ENCODE measurements at regions of chrX and their contacts with region 1.

Region 1: GRCh38 chrX:47941423-47941822 is 62.4 kb downstream of the ZNF182 start:
- DNase-seq: no peak

Region 2: GRCh38 chrX:47900833-47901232 is 40.6 kb before region 1 on chrX:
- intact Hi-C with region 1: no loop called
- DNase-seq: no peak

Region 3: DNA sequence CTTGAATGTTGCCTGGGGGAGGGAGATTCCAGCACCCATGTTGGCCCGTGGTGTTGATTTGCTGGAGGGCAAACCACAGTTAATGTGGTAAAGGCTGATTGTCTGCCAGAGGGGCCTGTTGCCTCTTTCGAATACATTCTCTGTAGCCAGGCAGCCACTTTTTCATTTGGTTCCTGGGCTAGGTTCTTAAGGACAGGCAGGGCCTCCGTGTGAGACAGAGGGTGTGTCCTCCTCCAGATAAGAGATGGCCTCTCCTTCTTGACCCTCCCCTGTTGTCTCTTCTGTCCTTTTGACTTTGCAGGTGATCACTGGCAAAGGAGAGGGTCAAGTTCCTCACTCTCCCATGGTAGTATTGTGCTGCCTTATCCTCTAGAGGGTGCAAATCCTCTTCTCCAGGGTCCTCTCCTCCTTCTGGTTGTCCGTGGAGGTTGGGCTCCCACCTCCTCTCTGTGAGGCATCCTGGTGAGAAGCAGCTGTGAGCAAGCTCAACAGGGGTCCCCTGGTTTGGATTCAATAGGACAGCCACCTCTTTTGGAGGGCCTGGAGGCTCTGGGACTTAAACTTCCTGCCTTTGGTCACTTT is 17.4 kb after region 1 on chrX:
- intact Hi-C with region 1: loop called in 1 of 2 experiments (anchors 1 kb)
- DNase-seq: no peak

Measured in posterior vena cava (tissue), 2 donors.